CD14-positive monocyte (primary cell): ENCODE measurements at regions of chr5 and their contacts with region 1.

Region 1: DNA sequence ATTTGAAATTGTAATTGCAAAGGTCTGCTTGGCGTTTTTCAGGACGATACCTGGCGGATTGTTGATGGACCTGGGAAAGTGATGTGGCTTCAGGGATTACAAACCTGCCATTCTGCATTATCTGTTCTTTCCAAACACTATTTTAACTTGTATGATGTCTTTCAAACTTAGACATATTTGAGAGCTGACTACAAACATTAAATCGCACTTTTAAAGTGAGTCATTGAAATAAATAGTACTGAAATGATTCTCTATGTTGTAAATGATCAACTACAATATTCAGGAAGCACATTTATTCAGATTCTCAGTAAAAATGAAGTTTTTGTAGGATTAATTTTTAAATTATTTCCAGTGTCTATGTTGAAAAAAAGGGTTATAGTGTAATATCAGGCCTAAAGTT is 32.3 kb upstream of the TMEM171 start:
- DNase-seq: no peak
- H3K4me3 ChIP-seq: no peak overlapping the region
- H3K4me3 Mint-ChIP-seq: no peak overlapping the region
- H3K27ac ChIP-seq: no peak overlapping the region
- H3K27ac Mint-ChIP-seq: no peak overlapping the region
- H3K4me1 ChIP-seq: no peaks in the 10 kb centered on the region
- H3K4me1 Mint-ChIP-seq: no peaks in the 10 kb centered on the region
- H3K27me3 ChIP-seq: no peaks in the 10 kb centered on the region
- H3K27me3 Mint-ChIP-seq: peaks cover 0 to 6% (median 2%) of the 10 kb centered on the region in 3 donors
- CTCF ChIP-seq: no peak

Region 2: DNA sequence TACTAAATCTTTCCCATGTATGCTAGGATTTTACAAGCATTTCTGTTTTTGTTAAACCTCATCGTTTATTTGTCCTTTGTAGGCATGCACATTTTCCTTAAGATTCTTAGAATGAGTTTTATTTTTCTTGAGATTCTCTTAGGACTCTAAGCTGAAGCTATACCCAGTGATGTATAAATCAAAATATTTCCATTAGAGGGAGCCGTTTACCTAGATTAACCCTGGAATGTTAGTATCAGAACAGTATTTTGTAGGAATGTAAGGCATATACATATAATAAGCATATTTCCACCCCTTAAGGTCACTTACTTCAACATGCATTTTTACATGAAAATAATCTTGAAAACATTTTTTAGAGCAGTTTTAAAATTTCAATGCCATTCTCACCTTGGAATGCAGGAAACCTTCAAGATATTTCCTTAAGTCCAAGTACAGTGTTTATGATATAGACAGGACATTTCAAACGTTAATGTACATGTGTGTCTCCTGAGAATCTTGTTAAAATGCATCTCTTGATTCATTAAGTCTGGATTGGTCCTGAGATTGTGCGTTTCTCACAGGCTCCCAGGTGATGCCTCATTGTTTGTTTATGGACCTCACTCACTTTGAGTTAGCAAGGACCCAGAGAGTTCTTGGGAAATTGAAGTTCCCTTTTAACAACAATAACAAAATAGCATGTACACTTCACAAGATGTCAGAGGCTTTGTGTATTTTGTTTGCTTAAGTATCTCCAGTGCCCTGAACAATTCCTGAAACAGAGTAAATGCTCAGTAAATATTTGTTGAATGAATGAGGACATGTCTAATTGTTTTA is 167.1 kb before region 1 on chr5:
- intact Hi-C with region 1: loop called in 1 of 2 experiments (anchors 10 kb)
- DNase-seq: peak; percentile 9 to 55 (median 13)
- H3K4me3 ChIP-seq: no peak overlapping the region
- H3K4me3 Mint-ChIP-seq: no peak overlapping the region
- H3K27ac ChIP-seq: no peak overlapping the region
- H3K27ac Mint-ChIP-seq: no peak overlapping the region
- H3K4me1 ChIP-seq: no peaks in the 10 kb centered on the region
- H3K4me1 Mint-ChIP-seq: no peaks in the 10 kb centered on the region
- H3K27me3 ChIP-seq: no peaks in the 10 kb centered on the region
- H3K27me3 Mint-ChIP-seq: peaks cover 3 to 7% (median 6%) of the 10 kb centered on the region in 3 donors
- CTCF ChIP-seq: peak; percentile 64

Region 3: GRCh38 chr5:73135429-73136054 is 47.5 kb after region 1 on chr5:
- intact Hi-C with region 1: no loop called
- DNase-seq: no peak
- H3K4me3 ChIP-seq: no peak overlapping the region
- H3K4me3 Mint-ChIP-seq: peak overlapping the region in 1 of 2 donors; percentile 31
- H3K27ac ChIP-seq: no peak overlapping the region
- H3K27ac Mint-ChIP-seq: no peak overlapping the region
- H3K4me1 ChIP-seq: no peaks in the 10 kb centered on the region
- H3K4me1 Mint-ChIP-seq: no peaks in the 10 kb centered on the region
- H3K27me3 ChIP-seq: peaks cover 17 to 80% of the 10 kb centered on the region in 2 donors
- H3K27me3 Mint-ChIP-seq: peaks cover 42 to 75% (median 52%) of the 10 kb centered on the region in 3 donors
- CTCF ChIP-seq: no peak

Region 4: DNA sequence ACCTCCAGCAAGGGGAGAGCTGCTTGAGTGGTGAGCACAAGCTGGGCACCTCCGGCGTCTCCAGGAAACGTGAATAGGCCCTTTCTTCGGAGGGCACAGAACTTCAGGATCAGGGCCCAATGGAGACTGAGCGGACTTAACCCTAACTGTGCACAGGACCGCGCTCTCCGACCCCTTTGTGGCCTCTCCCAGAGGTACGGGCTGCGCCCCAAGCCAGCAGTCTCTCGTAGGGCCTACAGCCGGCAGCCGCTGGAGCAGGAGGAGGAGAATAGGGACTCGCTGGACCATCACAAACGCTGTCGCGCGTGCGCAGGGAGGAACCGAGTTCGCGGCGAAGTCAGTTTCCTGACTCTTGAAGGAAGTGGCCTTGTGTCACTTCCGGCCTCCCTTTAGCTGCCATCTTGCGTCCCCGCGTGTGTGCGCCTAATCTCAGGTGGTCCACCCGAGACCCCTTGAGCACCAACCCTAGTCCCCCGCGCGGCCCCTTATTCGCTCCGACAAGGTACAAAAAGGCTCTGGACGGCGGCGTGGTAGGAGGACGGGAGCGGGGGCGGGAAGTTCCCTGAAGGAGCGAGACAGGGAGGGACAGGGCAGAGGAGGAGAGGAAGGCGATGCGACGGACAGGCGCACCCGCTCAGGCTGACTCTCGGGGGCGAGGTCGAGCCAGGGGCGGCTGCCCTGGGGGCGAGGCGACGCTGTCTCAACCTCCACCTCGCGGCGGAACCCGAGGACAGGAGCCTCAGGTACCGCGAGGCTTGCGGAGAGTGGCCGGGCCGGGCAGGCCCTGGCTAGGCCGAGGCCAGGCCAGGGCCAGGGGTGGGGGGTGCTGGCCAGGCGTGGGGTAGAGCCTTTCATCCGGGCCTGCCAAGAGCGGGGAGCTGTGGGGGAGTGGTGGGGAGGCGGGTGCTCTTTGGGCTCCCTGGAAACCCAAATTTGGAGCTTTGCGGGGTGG is 410.3 kb after region 1 on chr5 and contains the start of gene BTF3:
- intact Hi-C with region 1: no loop called
- DNase-seq: peak; percentile 94 to 96 (median 96)
- H3K4me3 ChIP-seq: peak within 1 kb of the TSS; percentile 47 to 87 (median 86)
- H3K4me3 Mint-ChIP-seq: peak within 1 kb of the TSS; percentile 89 to 96
- H3K27ac ChIP-seq: peak within 1 kb of the TSS; percentile 77 to 99
- H3K27ac Mint-ChIP-seq: peak within 1 kb of the TSS; percentile 92 to 99 (median 98)
- H3K4me1 ChIP-seq: peaks cover 14 to 27% of the 10 kb centered on the region in 2 donors
- H3K4me1 Mint-ChIP-seq: peaks cover 26% of the 10 kb centered on the region
- H3K27me3 ChIP-seq: peaks cover 2 to 9% of the 10 kb centered on the region in 2 donors
- H3K27me3 Mint-ChIP-seq: peaks cover 4 to 7% (median 5%) of the 10 kb centered on the region in 3 donors
- CTCF ChIP-seq: no peak
- polyA plus RNA-seq, gene BTF3: 486 to 559 (median 512) TPM